ENCODE measurements at regions of chr10 and their contacts with region 1.

Region 1: GRCh38 chr10:43420369-43421200 is 11.6 kb upstream of the HNRNPF start:
- DNase-seq: peak; percentile 94 to 95
- ATAC-seq: peak; percentile 99
- H3K4me3 ChIP-seq: peak overlapping the region; percentile 6 to 12
- H3K27ac ChIP-seq: peak overlapping the region; percentile 57 to 90
- H3K4me1 ChIP-seq: no peaks in the 10 kb centered on the region
- H3K27me3 ChIP-seq: no peaks in the 10 kb centered on the region

Region 2: DNA sequence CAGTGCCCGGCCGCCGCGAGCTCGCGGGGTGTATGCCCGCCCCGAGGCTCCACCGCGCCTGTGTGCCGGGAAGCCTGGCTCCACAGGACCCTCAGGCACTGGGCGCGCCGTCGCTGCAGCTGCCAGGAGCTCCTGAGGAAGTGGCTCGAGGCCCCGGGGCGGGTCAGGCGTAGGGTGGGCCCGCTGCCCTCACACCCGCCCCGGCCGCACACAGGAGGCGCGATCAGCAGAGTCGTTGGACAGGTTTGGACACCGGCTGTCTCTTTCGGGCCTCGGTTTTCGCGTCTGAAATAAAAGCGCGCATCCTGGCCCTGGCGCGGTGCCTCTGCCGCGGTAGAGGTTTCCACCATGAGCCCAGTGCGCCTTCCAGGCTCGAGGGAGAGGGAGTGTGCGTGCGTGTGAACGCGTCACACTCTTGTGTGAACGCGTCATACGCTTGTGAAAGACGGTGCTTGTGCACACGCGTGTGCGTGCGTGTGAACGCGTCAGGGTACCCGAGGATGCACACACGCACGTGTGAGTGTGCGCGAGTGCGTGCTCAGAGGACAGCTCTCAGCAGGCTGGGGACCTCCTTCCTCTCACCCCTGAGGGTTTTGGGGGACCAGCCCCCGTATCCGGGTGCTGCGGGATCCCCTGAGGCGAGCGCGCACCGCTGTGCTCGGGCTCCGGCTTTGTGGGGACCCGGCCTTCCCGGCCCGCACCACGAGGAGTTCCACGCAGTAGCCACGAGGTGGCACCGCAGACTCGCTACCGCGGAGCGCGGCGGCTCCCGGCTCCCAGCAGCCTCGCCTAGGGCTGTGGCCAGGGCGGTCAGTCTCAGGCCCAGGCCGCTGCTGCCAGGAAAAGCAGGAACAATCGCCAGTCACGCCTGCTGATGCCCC is 554.2 kb before region 1 on chr10:
- intact Hi-C with region 1: no loop called
- DNase-seq: peak; percentile 87 to 90
- ATAC-seq: peak; percentile 92
- H3K4me3 ChIP-seq: no peak overlapping the region
- H3K27ac ChIP-seq: no peak overlapping the region
- H3K4me1 ChIP-seq: no peaks in the 10 kb centered on the region
- H3K27me3 ChIP-seq: no peaks in the 10 kb centered on the region

Region 3: GRCh38 chr10:43408710-43409384 is 11.7 kb before region 1 on chr10 and contains the start of gene HNRNPF:
- intact Hi-C with region 1: loop called in 1 of 2 experiments (anchors 1 kb)
- DNase-seq: peak; percentile 97
- ATAC-seq: peak; percentile 96
- H3K4me3 ChIP-seq: peak within 1 kb of the TSS; percentile 39 to 87
- H3K27ac ChIP-seq: peak within 1 kb of the TSS; percentile 50 to 99
- H3K4me1 ChIP-seq: peaks cover 0 to 6% of the 10 kb centered on the region in 2 donors
- H3K27me3 ChIP-seq: no peaks in the 10 kb centered on the region
- total RNA-seq, gene HNRNPF: 103 to 114 TPM

Measured in aorta (tissue), 5 donors.